SK-N-SH (cell line): ENCODE measurements at regions of chr13 and their contacts with region 1.

Region 1: GRCh38 chr13:99176309-99177276 is 24.1 kb upstream of the UBAC2 start:
- DNase-seq: peak; percentile 85
- H3K4me3 ChIP-seq: peak overlapping the region; percentile 6 to 26; a peak in 2 of 4 replicates
- H3K27ac ChIP-seq: no peak overlapping the region
- H3K4me1 ChIP-seq: peaks cover 0 to 6% of the 10 kb centered on the region in 2 experiments; a peak in 1 of 4 replicates
- H3K27me3 ChIP-seq: no peaks in the 10 kb centered on the region
- CTCF ChIP-seq: peak; percentile 86
- EP300 ChIP-seq: no peak
- RAD21 ChIP-seq: peak; percentile 92

Region 2: GRCh38 chr13:99124794-99125316 is 51.7 kb before region 1 on chr13:
- CTCF ChIA-PET with region 1: interaction called, 12 read pairs
- POLR2A ChIA-PET with region 1: no interaction called
- DNase-seq: no peak
- H3K4me3 ChIP-seq: no peak overlapping the region
- H3K27ac ChIP-seq: peak overlapping the region in 1 of 2 experiments; percentile 11; a peak in 1 of 4 replicates
- H3K4me1 ChIP-seq: 0 out of 4 replicates have a peak, but pooled peaks cover 0 to 5% of the 10 kb centered on the region in 2 experiments
- H3K27me3 ChIP-seq: no peaks in the 10 kb centered on the region
- CTCF ChIP-seq: no peak
- EP300 ChIP-seq: no peak
- RAD21 ChIP-seq: no peak

Region 3: DNA sequence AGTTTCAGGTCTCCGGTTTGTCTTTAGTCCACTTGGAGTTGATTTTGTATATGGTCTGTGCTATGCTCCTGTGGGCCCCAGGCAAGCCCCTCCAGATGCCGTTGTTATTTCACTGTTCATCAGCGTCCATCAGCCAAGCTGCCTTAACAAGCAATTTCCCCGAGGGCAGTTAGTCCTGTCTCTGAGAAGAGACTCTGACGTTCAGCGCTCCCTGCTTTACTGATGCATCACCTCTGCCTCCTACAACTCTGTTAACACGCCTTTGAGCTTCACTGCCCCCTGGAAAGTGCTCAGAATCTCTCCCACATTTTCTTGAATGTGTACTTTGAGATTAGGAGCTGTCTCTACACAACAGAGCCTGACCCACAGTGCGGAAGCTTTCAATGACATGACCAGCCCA is 17.7 kb before region 1 on chr13:
- CTCF ChIA-PET with region 1: interaction called, 32 read pairs
- POLR2A ChIA-PET with region 1: interaction called, 4 read pairs
- DNase-seq: no peak
- H3K4me3 ChIP-seq: no peak overlapping the region
- H3K27ac ChIP-seq: no peak overlapping the region
- H3K4me1 ChIP-seq: no peaks in the 10 kb centered on the region; a peak in 1 of 4 replicates
- H3K27me3 ChIP-seq: no peaks in the 10 kb centered on the region; the same call in 1 of the 2 replicates
- CTCF ChIP-seq: no peak
- EP300 ChIP-seq: no peak
- RAD21 ChIP-seq: no peak

Region 4: DNA sequence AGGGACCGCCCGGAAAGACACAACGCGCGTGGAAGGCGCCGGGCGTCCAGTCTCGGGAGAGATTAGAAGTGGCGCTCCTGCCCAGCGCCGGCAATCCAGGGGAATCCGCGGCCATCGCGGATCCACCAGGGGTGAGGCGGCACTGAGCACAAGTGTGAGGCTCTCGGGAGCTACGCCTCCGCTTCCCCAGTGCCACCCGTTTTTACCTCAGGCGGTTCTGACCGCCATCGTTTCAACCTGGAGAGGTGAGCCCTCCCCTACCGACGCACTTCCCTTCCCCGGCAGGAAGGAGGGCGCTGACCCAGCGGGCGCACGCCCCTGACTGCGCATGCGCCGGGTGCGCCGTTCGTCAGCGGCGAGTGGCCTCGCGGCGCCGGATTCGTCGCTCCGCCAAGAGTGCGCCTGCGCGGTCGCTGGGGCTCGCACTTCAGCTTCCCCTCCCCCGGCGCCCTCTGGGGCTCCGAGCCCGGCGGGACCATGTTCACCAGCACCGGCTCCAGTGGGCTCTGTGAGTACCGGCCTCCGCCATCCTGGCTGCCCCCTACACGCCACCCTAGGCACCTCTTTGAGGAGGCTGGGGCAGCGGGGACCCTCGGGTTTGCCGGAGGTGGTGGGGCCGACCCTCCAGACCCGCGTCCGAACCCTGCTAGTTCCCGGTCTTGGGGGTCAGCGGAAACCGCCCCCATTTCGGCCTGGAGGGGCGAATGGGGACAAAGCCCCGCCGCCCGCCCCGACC is 24.0 kb after region 1 on chr13 and contains the start of gene UBAC2:
- CTCF ChIA-PET with region 1: interaction called, 36 read pairs
- POLR2A ChIA-PET with region 1: no interaction called
- DNase-seq: peak; percentile 99
- H3K4me3 ChIP-seq: peak within 1 kb of the TSS; percentile 95 to 98
- H3K27ac ChIP-seq: peak within 1 kb of the TSS; percentile 88 to 89
- H3K4me1 ChIP-seq: peaks cover 0 to 6% of the 10 kb centered on the region in 2 experiments; a peak in 2 of 4 replicates
- H3K27me3 ChIP-seq: no peaks in the 10 kb centered on the region
- CTCF ChIP-seq: peak; percentile 10; the same call in 1 of the 2 replicates
- EP300 ChIP-seq: no peak
- RAD21 ChIP-seq: no peak
- polyA plus RNA-seq, gene UBAC2: 79.0 and 97.4 TPM in 2 replicates

Region 5: GRCh38 chr13:99258210-99258860 is 81.7 kb after region 1 on chr13 and contains the start of gene GPR18:
- CTCF ChIA-PET with region 1: interaction called, 184 read pairs
- POLR2A ChIA-PET with region 1: no interaction called
- DNase-seq: no peak
- H3K4me3 ChIP-seq: no peak within 1 kb of the TSS
- H3K27ac ChIP-seq: no peak within 1 kb of the TSS
- H3K4me1 ChIP-seq: no peaks in the 10 kb centered on the region; a peak in 2 of 4 replicates
- H3K27me3 ChIP-seq: no peaks in the 10 kb centered on the region
- CTCF ChIP-seq: no peak
- EP300 ChIP-seq: no peak
- RAD21 ChIP-seq: no peak
- polyA plus RNA-seq, gene GPR18: not detected in 2 replicates

Region 6: DNA sequence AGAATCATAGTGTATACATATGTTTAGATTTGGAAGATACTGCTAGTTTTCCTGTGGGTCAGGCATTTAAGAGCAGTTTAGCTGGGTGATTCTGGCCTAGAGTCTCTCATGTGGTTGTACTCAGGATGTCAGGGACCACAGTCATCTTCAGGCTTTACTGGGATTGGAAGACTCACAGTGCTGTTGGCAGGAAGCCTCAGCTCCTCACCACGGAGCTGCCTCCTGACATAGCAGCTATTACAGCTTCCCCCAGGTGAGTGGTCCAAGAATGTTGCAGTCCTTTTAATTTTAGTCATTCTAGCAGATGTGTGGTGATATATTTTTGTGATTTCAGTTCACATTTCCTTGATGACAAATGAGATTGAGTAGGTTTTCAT is 98.5 kb after region 1 on chr13:
- CTCF ChIA-PET with region 1: interaction called, 184 read pairs
- POLR2A ChIA-PET with region 1: no interaction called
- DNase-seq: no peak
- H3K4me3 ChIP-seq: no peak overlapping the region
- H3K27ac ChIP-seq: no peak overlapping the region
- H3K4me1 ChIP-seq: no peaks in the 10 kb centered on the region
- H3K27me3 ChIP-seq: no peaks in the 10 kb centered on the region
- CTCF ChIP-seq: no peak
- EP300 ChIP-seq: no peak
- RAD21 ChIP-seq: no peak